Adrenal gland (tissue), 19 donors: ENCODE measurements at regions of chr16 and their contacts with region 1.

Region 1: GRCh38 chr16:88194397-88195268 is 188.1 kb upstream of the ZNF469 start:
- DNase-seq: peak; percentile 48 to 78 (median 66)
- H3K4me3 ChIP-seq: no peak overlapping the region
- H3K27ac ChIP-seq: peak overlapping the region in 2 of 5 donors; percentile 52 to 70
- H3K4me1 ChIP-seq: peaks cover 0 to 6% of the 10 kb centered on the region in 2 donors
- H3K27me3 ChIP-seq: no peaks in the 10 kb centered on the region
- CTCF ChIP-seq: no peak
- POLR2A ChIP-seq: no peak

Region 2: DNA sequence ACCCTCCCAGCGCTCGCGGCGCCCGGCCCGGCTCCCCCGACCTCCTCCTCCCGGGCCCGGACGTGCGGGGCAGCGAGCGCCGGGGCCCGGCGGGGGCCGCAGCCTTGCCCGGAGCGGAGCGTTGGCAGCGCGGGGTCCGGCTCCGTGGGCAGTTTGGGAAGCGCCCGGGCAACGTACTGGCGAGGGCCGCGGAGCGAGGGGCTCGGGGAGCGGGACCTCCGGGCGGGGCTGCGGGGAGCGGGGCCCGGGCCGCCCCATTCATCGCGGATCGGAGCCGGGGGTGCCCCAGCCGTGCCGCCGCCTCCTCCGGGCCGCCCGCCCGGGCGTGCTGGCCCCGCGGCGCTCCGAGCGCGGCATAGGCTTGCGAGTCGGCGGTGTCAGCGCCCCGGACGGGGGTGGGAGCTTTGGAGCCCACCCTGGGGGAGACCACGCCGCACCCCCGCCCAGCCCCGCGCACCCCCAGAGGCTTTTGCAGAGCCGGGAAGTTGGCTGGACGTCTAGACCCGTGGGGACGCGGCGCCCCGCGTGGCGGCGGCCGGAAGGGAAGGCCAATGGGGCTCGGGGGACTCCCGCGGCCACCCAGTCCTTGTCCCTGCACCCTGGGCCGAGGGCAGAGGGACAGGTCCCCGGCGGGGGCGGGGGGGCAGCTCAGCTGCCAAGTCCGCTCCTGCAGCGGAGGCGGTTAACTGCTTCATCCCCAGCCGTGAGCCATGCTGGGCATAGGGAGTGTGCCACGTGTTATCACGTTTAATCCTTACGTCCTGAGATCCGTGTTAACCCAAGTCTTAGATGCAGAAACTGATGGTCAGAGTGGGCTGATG is 189.0 kb after region 1 on chr16:
- intact Hi-C with region 1: loop called in 1 of 2 experiments (anchors 5 kb)
- DNase-seq: peak in 5 of 7 donors; percentile 32 to 59 (median 49)
- H3K4me3 ChIP-seq: peak overlapping the region in 1 of 4 donors; percentile 57
- H3K27ac ChIP-seq: peak overlapping the region in 1 of 5 donors; percentile 16
- H3K4me1 ChIP-seq: peaks cover 6% of the 10 kb centered on the region in 2 donors
- H3K27me3 ChIP-seq: no peaks in the 10 kb centered on the region
- CTCF ChIP-seq: peak; percentile 34 to 54 (median 46)
- POLR2A ChIP-seq: no peak

Region 3: GRCh38 chr16:88431651-88432050 is 237.0 kb after region 1 on chr16:
- intact Hi-C with region 1: loop called in 1 of 2 experiments (anchors 2 kb)
- DNase-seq: no peak
- H3K4me3 ChIP-seq: no peak overlapping the region
- H3K27ac ChIP-seq: no peak overlapping the region
- H3K4me1 ChIP-seq: no peaks in the 10 kb centered on the region
- H3K27me3 ChIP-seq: peaks cover 12% of the 10 kb centered on the region
- CTCF ChIP-seq: no peak
- POLR2A ChIP-seq: no peak